Adrenal gland (tissue), 19 donors: ENCODE measurements at regions of chr11 and their contacts with region 1.

Region 1: DNA sequence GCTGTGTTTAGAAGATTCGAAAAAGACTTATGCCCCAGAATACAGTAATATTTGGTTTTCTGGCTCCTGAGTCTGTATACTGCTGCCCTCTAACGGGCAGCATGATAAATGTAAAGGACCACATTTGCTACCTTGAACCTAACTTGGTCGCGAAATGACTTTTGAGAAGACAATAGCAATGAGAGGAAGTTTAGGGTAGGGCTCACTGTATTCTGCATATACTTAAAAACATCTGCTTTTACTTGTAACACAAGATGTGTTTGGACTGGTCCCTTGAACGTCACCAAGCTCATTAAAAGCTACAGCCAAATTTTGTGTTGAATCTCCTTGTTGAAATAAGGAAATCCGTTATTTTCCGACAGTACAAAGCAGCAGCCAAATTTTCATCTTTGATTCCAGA is 309.1 kb downstream of the SWAP70 start:
- DNase-seq: peak in 3 of 7 donors; percentile 14 to 35 (median 28)
- H3K4me3 ChIP-seq: no peak overlapping the region
- H3K27ac ChIP-seq: no peak overlapping the region
- H3K4me1 ChIP-seq: peaks cover 0 to 7% of the 10 kb centered on the region in 2 donors
- H3K27me3 ChIP-seq: no peaks in the 10 kb centered on the region
- CTCF ChIP-seq: peak; percentile 46 to 73 (median 62)
- POLR2A ChIP-seq: no peak

Region 2: DNA sequence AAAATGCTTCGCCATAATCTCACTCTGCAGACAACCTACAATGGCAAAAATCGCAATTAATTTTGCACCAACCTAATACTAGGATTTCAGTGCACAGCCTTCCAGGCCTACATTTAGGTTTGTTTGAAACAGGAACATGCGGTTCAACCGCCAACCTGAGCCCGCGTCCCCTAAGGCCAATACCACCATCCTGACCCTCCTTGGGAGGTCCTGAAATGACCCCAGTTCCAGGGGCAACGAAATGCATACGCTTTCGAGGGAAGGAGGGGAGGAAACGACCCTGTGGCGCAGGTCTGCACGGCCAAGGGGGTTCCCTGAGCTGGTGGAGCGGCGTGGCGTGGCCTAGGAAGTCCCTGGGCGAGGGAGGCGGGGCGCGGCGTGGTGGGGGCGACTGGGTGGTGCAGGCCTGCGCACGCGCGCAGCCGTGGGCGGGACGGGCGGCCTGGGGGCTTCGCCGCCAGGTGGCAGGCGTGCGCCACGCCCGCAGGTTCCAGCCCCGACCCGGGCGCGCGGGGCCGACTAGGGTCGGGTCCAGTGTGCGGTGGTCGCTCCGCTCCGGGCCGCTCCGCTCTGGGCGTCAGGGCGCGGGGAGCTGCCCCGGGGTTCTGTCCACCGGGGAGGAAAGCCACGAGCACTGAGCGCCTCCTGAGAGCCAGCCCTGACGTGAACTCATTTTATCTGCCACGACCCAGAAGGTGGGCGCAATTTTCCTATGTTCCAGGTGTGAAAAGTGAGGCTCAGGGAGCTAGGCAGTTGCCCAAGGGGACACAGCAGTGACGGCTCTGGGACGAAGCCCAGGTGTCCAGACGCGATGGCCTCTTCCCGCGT is 215.0 kb before region 1 on chr11:
- intact Hi-C with region 1: loop called (anchors 2 to 5 kb)
- DNase-seq: peak; percentile 84 to 92 (median 88)
- H3K4me3 ChIP-seq: peak overlapping the region; percentile 28 to 86 (median 44)
- H3K27ac ChIP-seq: peak overlapping the region in 4 of 5 donors; percentile 64 to 84 (median 78)
- H3K4me1 ChIP-seq: peaks cover 12 to 23% of the 10 kb centered on the region in 2 donors
- H3K27me3 ChIP-seq: no peaks in the 10 kb centered on the region
- CTCF ChIP-seq: peak in 5 of 6 experiments; percentile 31 to 97 (median 96)
- POLR2A ChIP-seq: no peak

Region 3: GRCh38 chr11:9861860-9862725 is 110.9 kb before region 1 on chr11:
- intact Hi-C with region 1: loop called in 1 of 2 experiments (anchors 10 kb)
- DNase-seq: peak; percentile 39 to 81 (median 52)
- H3K4me3 ChIP-seq: no peak overlapping the region
- H3K27ac ChIP-seq: no peak overlapping the region
- H3K4me1 ChIP-seq: peaks cover 0 to 18% of the 10 kb centered on the region in 2 donors
- H3K27me3 ChIP-seq: no peaks in the 10 kb centered on the region
- CTCF ChIP-seq: peak; percentile 43 to 75 (median 66)
- POLR2A ChIP-seq: no peak